H1 (cell line): ENCODE measurements at regions of chr13 and their contacts with region 1.

Region 1: GRCh38 chr13:70339738-70340137 is 231.5 kb upstream of the KLHL1 start:
- DNase-seq: peak; percentile 19 to 52
- H3K4me3 ChIP-seq: no peak overlapping the region
- H3K27ac ChIP-seq: no peak overlapping the region
- H3K4me1 ChIP-seq: no peaks in the 10 kb centered on the region
- H3K27me3 ChIP-seq: no peaks in the 10 kb centered on the region
- CTCF ChIP-seq: peak; percentile 5 to 78 (median 74)
- EP300 ChIP-seq: no peak
- POLR2A ChIP-seq: no peak
- RAD21 ChIP-seq: peak; percentile 74 to 78

Region 2: GRCh38 chr13:70324519-70324918 is 15.2 kb before region 1 on chr13:
- CTCF ChIA-PET with region 1: interaction called, 12 read pairs
- POLR2A ChIA-PET with region 1: no interaction called
- DNase-seq: no peak
- H3K4me3 ChIP-seq: no peak overlapping the region
- H3K27ac ChIP-seq: no peak overlapping the region
- H3K4me1 ChIP-seq: no peaks in the 10 kb centered on the region
- H3K27me3 ChIP-seq: no peaks in the 10 kb centered on the region
- CTCF ChIP-seq: no peak
- EP300 ChIP-seq: no peak
- POLR2A ChIP-seq: no peak
- RAD21 ChIP-seq: no peak